Pancreas (tissue), 10 donors: ENCODE measurements at regions of chr20 and their contacts with region 1.

Region 1: GRCh38 chr20:10115021-10115420 is 80.2 kb downstream of the ANKEF1 start:
- DNase-seq: no peak
- ATAC-seq: no peak
- H3K4me3 ChIP-seq: no peak overlapping the region
- H3K27ac ChIP-seq: no peak overlapping the region
- H3K4me1 ChIP-seq: peaks cover 16 to 22% (median 17%) of the 10 kb centered on the region in 3 donors
- H3K27me3 ChIP-seq: no peaks in the 10 kb centered on the region
- CTCF ChIP-seq: no peak

Region 2: DNA sequence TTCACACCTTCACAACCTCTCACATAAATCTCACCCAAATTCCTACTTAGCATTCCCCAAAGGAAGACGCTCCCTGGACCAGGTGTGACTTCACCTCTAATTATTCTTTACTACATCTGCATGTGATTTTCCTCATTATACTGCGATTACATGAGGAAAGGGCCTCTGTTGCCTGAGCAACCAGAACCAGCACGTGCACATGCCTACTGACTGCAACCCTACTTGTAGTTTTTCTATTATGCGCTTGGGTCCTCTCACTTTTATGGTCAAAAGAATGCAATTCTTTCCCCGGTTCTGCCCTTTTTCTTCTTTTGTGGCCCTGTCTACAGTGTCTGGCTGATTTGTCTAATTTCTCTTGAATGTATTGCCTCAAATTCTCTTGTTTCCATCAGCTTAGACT is 100.6 kb before region 1 on chr20:
- intact Hi-C with region 1: no loop called
- DNase-seq: no peak
- ATAC-seq: no peak
- H3K4me3 ChIP-seq: no peak overlapping the region
- H3K27ac ChIP-seq: no peak overlapping the region
- H3K4me1 ChIP-seq: peaks cover 0 to 12% (median 0%) of the 10 kb centered on the region in 3 donors
- H3K27me3 ChIP-seq: no peaks in the 10 kb centered on the region
- CTCF ChIP-seq: no peak

Region 3: DNA sequence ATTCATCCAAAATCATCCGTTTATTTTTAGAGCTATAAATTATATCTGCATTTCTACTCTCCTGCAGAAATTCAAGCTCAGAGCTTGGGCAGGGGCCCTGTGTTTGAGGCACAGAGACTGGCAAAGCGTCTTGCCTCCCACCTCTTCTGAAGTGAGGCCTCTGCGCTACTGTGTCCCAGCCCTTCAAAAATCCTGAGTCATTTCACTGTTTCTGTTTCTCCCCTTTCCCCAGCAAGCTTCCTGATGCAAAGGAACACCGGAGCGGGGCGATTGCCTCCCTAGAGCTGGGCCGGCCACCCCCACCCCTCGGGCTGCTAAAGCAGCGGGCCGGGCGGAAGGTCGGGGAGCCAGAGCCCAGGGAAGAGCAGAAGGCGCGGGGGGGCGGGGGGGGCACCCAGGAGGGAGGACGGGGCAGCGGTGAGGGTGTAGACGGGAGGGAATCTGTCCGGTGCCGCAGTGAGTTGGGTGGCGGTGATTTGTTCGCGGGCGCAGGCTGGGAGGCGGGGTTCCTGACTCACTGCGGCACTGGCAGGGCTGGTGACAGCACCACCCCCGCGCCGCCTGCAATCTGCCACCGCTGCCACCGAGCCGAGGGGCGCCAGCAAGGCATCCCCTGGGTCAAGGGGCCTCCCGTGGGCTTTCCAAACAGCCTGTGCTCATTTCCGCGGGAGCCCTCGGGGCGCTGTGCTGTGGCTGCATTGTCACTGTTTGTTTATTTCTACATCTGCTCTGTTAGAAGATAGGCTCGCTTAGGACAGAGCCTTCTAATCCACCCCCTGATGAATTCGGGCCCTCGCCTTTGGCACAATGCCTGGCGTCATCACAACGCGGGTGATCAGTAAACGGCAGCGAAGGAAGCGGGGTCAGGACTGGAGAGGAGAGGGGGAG is 57.1 kb after region 1 on chr20:
- intact Hi-C with region 1: loop called in 1 of 3 experiments (anchors 10 kb)
- DNase-seq: peak; percentile 27 to 82 (median 47)
- ATAC-seq: peak; percentile 83 to 97 (median 96)
- H3K4me3 ChIP-seq: peak overlapping the region in 2 of 4 donors; percentile 32 to 35
- H3K27ac ChIP-seq: peak overlapping the region in 1 of 4 donors; percentile 44
- H3K4me1 ChIP-seq: no peaks in the 10 kb centered on the region
- H3K27me3 ChIP-seq: no peaks in the 10 kb centered on the region
- CTCF ChIP-seq: no peak

Region 4: GRCh38 chr20:10209091-10209490 is 94.1 kb after region 1 on chr20:
- intact Hi-C with region 1: no loop called
- DNase-seq: no peak
- ATAC-seq: no peak
- H3K4me3 ChIP-seq: no peak overlapping the region
- H3K27ac ChIP-seq: no peak overlapping the region
- H3K4me1 ChIP-seq: no peaks in the 10 kb centered on the region
- H3K27me3 ChIP-seq: no peaks in the 10 kb centered on the region
- CTCF ChIP-seq: no peak